ENCODE measurements at regions of chr6 and their contacts with region 1.

Region 1: DNA sequence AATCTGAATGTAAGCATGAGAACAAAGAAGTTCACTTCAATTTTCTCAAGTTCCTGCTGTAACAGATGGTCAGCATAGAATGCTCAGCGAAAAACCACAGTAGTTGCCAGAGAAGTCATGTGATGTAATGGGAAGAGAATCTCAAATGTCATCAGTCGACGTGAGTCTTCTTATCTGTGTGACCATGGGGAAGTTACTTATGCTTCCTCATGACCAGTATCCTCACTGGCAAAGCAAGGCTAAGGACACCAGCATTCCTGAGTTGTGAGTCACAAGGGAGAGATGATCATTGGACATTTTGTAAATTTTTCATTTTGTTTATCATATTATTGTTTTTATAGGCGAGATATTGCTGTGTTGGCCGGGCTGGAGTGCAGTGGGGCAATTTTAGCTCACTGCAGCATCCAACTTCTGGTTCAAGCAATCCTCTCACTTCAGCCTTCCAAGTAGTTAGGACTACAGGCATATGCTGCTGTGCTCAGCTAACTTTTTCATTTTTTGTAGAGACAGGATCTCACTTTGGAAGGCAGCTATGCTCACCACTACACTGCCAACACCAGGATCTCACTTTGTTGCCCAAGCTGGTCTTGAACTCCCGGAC is 21.9 kb downstream of the SGK1 start:
- DNase-seq: peak; percentile 94
- H3K4me3 ChIP-seq: no peak overlapping the region
- H3K27ac ChIP-seq: peak overlapping the region; percentile 99
- H3K4me1 ChIP-seq: peaks cover 23% of the 10 kb centered on the region
- H3K27me3 ChIP-seq: no peaks in the 10 kb centered on the region
- CTCF ChIP-seq: no peak
- POLR2A ChIP-seq: peak; percentile 81

Region 2: DNA sequence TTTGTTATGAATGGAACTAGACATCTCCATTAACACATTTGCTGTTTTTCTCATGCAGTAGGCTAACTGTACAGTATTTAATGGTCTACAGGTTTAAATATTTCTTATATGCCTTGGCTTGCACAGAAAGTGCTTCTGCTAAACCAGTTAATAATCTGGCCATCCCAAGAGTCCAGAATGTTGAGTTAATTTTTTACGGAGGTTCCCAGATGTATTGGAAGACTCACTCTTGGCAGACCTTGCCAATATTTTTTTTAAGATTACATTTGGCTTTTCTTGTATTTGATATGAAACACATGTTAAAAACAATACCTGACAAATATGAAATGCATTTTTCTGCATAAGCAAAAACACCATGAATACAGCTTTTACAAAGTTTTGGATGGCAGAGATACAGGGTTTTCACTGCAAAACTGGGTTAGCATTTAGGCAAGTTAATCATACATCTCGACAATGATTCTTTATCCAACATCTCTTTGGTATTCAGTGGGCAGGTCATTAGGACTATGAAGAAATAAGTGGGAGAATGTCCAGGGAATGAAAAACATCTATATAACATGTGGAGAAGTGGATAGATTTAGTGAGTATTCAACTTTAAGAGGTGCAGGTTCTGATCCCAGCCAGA is 72.1 kb before region 1 on chr6:
- CTCF ChIA-PET with region 1: no interaction called
- POLR2A ChIA-PET with region 1: no interaction called
- dilution Hi-C with region 1: no loop called
- intact Hi-C with region 1: no loop called
- DNase-seq: no peak
- H3K4me3 ChIP-seq: no peak overlapping the region
- H3K27ac ChIP-seq: no peak overlapping the region
- H3K4me1 ChIP-seq: no peaks in the 10 kb centered on the region
- H3K27me3 ChIP-seq: no peaks in the 10 kb centered on the region
- CTCF ChIP-seq: no peak
- POLR2A ChIP-seq: no peak

Region 3: GRCh38 chr6:134317471-134318131 is 21.5 kb after region 1 on chr6 and contains the start of gene SGK1:
- CTCF ChIA-PET with region 1: interaction called, 6 read pairs
- POLR2A ChIA-PET with region 1: interaction called, 3 read pairs
- dilution Hi-C with region 1: no loop called
- intact Hi-C with region 1: loop called (anchors 1 kb)
- DNase-seq: peak; percentile 29
- H3K4me3 ChIP-seq: peak within 1 kb of the TSS; percentile 45 to 64 (median 53)
- H3K27ac ChIP-seq: no peak within 1 kb of the TSS
- H3K4me1 ChIP-seq: peaks cover 6% of the 10 kb centered on the region
- H3K27me3 ChIP-seq: no peaks in the 10 kb centered on the region
- CTCF ChIP-seq: no peak
- POLR2A ChIP-seq: no peak
- total RNA-seq, gene SGK1: 121 and 150 TPM in 2 replicates

Region 4: GRCh38 chr6:134720353-134721059 is 424.5 kb after region 1 on chr6:
- CTCF ChIA-PET with region 1: no interaction called
- POLR2A ChIA-PET with region 1: no interaction called
- dilution Hi-C with region 1: no loop called
- intact Hi-C with region 1: loop called (anchors 5 kb)
- DNase-seq: peak; percentile 94
- H3K4me3 ChIP-seq: no peak overlapping the region
- H3K27ac ChIP-seq: peak overlapping the region; percentile 74
- H3K4me1 ChIP-seq: peaks cover 37% of the 10 kb centered on the region
- H3K27me3 ChIP-seq: no peaks in the 10 kb centered on the region
- CTCF ChIP-seq: no peak
- POLR2A ChIP-seq: peak; percentile 61

Measured in endothelial cell of umbilical vein (primary cell).